Breast epithelium (tissue), 4 donors: ENCODE measurements at regions of chr9 and their contacts with region 1.

Region 1: GRCh38 chr9:31790725-31791124 is 593.7 kb upstream of the ACO1 start:
- DNase-seq: no peak
- H3K4me3 ChIP-seq: no peak overlapping the region
- H3K27ac ChIP-seq: no peak overlapping the region
- H3K4me1 ChIP-seq: no peaks in the 10 kb centered on the region
- H3K27me3 ChIP-seq: no peaks in the 10 kb centered on the region
- CTCF ChIP-seq: no peak
- POLR2A ChIP-seq: no peak

Region 2: GRCh38 chr9:31103836-31104235 is 686.9 kb before region 1 on chr9:
- intact Hi-C with region 1: loop called (anchors 5 kb)
- DNase-seq: no peak
- H3K4me3 ChIP-seq: no peak overlapping the region
- H3K27ac ChIP-seq: no peak overlapping the region
- H3K4me1 ChIP-seq: no peaks in the 10 kb centered on the region
- H3K27me3 ChIP-seq: no peaks in the 10 kb centered on the region
- CTCF ChIP-seq: no peak
- POLR2A ChIP-seq: no peak

Region 3: GRCh38 chr9:31776471-31776870 is 14.3 kb before region 1 on chr9:
- intact Hi-C with region 1: loop called (anchors 1 kb)
- DNase-seq: no peak
- H3K4me3 ChIP-seq: no peak overlapping the region
- H3K27ac ChIP-seq: no peak overlapping the region
- H3K4me1 ChIP-seq: no peaks in the 10 kb centered on the region
- H3K27me3 ChIP-seq: no peaks in the 10 kb centered on the region
- CTCF ChIP-seq: no peak
- POLR2A ChIP-seq: no peak